ENCODE measurements at regions of chr20 and their contacts with region 1.

Region 1: DNA sequence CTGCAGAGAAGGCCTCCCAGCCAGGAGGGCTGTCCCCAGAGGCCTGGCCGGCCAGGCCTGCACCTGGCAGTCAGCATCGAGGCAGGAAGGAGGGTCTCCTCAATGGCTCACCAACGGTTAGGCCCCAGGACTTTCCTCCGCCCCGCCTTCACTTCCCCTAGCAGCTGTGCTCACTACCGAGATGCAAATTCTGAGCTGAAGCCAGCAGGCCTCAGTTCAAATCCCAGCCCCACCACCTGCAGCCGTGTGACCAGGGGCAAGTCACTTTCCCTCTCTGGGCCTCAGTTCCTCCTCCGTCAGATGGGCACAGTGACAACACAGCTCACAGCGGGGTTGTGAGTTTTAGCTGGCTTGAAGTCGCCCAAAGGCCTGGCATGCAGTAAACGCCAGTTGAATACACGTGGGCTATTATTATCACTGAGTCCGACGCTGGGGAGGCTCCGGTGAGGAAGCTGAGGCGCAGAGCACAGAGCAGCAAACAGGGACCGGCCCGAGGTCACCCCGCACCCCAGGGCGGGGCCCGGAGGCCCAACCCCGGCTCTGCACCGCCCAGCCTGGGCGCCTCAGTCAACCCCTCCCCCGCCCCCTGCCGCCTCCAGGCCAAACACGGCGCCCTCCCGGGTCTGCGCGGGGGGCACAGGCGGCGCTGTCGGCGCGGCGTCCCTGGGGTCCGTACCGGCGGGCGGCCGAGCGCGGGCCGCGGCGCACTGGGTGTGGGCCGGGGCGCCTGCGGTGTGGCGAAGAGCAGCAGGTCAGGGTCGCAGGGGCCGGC is 671 bp downstream of the E2F1 start:
- DNase-seq: no peak
- ATAC-seq: peak; percentile 27
- H3K4me3 ChIP-seq: peak overlapping the region; percentile 41
- H3K27ac ChIP-seq: peak overlapping the region; percentile 49; the same call in 1 of the 2 replicates
- H3K4me1 ChIP-seq: peaks cover 11% of the 10 kb centered on the region
- H3K27me3 ChIP-seq: no peaks in the 10 kb centered on the region
- CTCF ChIP-seq: no peak
- POLR2A ChIP-seq: no peak
- RAD21 ChIP-seq: no peak

Region 2: GRCh38 chr20:32263398-32263954 is 1422.0 kb before region 1 on chr20:
- CTCF ChIA-PET with region 1: no interaction called
- POLR2A ChIA-PET with region 1: no interaction called
- dilution Hi-C with region 1: no loop called
- in situ Hi-C with region 1: no loop called
- intact Hi-C with region 1: no loop called
- DNase-seq: no peak
- ATAC-seq: no peak
- H3K4me3 ChIP-seq: no peak overlapping the region
- H3K27ac ChIP-seq: no peak overlapping the region
- H3K4me1 ChIP-seq: no peaks in the 10 kb centered on the region
- H3K27me3 ChIP-seq: no peaks in the 10 kb centered on the region; the same call in 1 of the 2 replicates
- CTCF ChIP-seq: no peak
- POLR2A ChIP-seq: no peak
- RAD21 ChIP-seq: no peak

Region 3: GRCh38 chr20:33719989-33720709 is 34.6 kb after region 1 on chr20 and contains the start of gene PXMP4:
- CTCF ChIA-PET with region 1: no interaction called
- POLR2A ChIA-PET with region 1: no interaction called
- dilution Hi-C with region 1: no loop called
- in situ Hi-C with region 1: no loop called
- intact Hi-C with region 1: loop called (anchors 1 kb)
- DNase-seq: peak; percentile 98
- ATAC-seq: peak; percentile 99
- H3K4me3 ChIP-seq: peak within 1 kb of the TSS; percentile 65
- H3K27ac ChIP-seq: peak within 1 kb of the TSS; percentile 6; the same call in 1 of the 2 replicates
- H3K4me1 ChIP-seq: peaks cover 5% of the 10 kb centered on the region
- H3K27me3 ChIP-seq: no peaks in the 10 kb centered on the region
- CTCF ChIP-seq: no peak
- POLR2A ChIP-seq: no peak
- RAD21 ChIP-seq: no peak
- total RNA-seq, gene PXMP4: 2.2 and 3.6 TPM in 2 replicates

Region 4: GRCh38 chr20:33915726-33916331 is 230.3 kb after region 1 on chr20:
- CTCF ChIA-PET with region 1: no interaction called
- POLR2A ChIA-PET with region 1: no interaction called
- dilution Hi-C with region 1: no loop called
- in situ Hi-C with region 1: no loop called
- intact Hi-C with region 1: no loop called
- DNase-seq: no peak
- ATAC-seq: no peak
- H3K4me3 ChIP-seq: no peak overlapping the region
- H3K27ac ChIP-seq: no peak overlapping the region
- H3K4me1 ChIP-seq: peaks cover 3% of the 10 kb centered on the region; the same call in 1 of the 2 replicates
- H3K27me3 ChIP-seq: peaks cover 5% of the 10 kb centered on the region
- CTCF ChIP-seq: peak; percentile 33
- POLR2A ChIP-seq: no peak
- RAD21 ChIP-seq: no peak; the same call in 1 of the 2 replicates

Region 5: DNA sequence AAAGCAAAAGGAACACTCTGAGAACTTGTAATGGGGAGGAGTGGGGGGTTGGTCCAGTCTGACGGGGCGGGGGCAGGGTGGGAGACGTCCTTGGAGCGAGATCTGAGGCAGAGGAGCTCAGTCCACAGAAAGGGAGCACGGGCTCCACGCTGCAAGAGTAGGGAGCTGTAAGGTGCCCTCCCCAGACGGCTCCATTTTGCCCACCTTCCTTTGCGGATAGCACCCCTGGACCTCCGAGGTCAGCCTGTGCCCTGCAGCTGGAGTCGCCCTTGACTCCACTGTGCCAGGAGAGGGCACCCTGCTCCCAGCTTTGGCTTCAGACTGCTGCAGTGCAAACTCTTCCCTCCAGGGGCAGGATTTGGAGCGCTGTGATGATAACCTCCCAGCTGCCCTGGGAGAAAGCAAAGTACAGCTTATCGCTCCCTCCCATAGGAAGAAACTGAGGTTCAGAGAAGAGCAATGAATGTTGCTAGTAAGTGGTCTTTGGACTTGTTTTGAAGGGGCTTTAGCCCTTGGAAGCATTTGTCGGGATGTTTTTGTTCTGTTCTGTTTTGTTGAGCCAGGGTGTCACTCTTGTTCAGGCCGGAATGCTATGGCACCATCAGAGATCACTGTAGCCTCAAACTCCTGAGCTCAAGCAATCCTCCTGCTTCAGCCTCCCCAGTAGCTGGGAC is 627.2 kb after region 1 on chr20:
- CTCF ChIA-PET with region 1: no interaction called
- POLR2A ChIA-PET with region 1: no interaction called
- dilution Hi-C with region 1: no loop called
- in situ Hi-C with region 1: no loop called
- intact Hi-C with region 1: no loop called
- DNase-seq: peak; percentile 81
- ATAC-seq: peak; percentile 97
- H3K4me3 ChIP-seq: peak overlapping the region; percentile 17; the same call in 1 of the 2 replicates
- H3K27ac ChIP-seq: no peak overlapping the region
- H3K4me1 ChIP-seq: peaks cover 4% of the 10 kb centered on the region
- H3K27me3 ChIP-seq: no peaks in the 10 kb centered on the region
- CTCF ChIP-seq: peak; percentile 100; the same call in 1 of the 2 replicates
- POLR2A ChIP-seq: peak; percentile 63; the same call in 1 of the 2 replicates
- RAD21 ChIP-seq: peak; percentile 100